ENCODE measurements at regions of chr3 and their contacts with region 1.

Region 1: GRCh38 chr3:149339931-149340309 is 6.5 kb upstream of the TM4SF18 start:
- DNase-seq: peak; percentile 81
- ATAC-seq: peak; percentile 90

Region 2: GRCh38 chr3:149377408-149378377 is 37.8 kb after region 1 on chr3 and contains the start of gene TM4SF1:
- intact Hi-C with region 1: loop called (anchors 5 kb)
- DNase-seq: peak; percentile 26
- ATAC-seq: peak; percentile 92
- total RNA-seq, gene TM4SF1: 124 TPM

Measured in Right ventricle myocardium inferior (tissue), 1 donor.